Activated B cell treated with CpG ODN at 0.5 μM for 24 hours (primary cell): ENCODE measurements at regions of chr20 and their contacts with region 1.

Region 1: GRCh38 chr20:5448449-5449118 is 131.8 kb upstream of the PROKR2 start:
- DNase-seq: no peak
- ATAC-seq: no peak
- H3K4me3 Mint-ChIP-seq: no peak overlapping the region
- H3K27ac Mint-ChIP-seq: no peak overlapping the region
- H3K4me1 Mint-ChIP-seq: no peaks in the 10 kb centered on the region
- H3K27me3 Mint-ChIP-seq: peaks cover 23% of the 10 kb centered on the region
- CTCF ChIP-seq: peak; percentile 38

Region 2: DNA sequence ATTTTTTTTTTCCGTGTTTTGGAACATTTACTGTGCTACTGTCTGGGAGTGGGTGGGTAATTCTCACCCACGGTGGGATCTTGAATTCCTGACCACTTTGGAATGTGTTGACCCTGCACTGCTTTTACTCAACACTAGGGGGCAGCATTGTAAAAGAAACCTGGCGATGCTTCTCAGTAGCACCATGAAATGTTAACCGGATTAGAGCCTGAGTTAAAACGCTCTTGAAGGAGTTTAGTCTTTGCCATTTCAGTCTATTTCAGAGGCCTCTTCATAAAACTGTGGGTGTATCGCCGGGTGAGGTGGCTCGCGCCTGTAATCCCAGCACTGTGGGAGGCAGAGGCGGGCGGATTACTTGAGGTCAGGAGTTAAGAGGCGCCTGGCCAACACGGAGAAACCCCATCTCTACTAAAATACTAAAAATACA is 841.3 kb before region 1 on chr20:
- CTCF ChIA-PET with region 1: interaction called, 5 read pairs
- POLR2A ChIA-PET with region 1: no interaction called
- intact Hi-C with region 1: loop called (anchors 1 kb)
- DNase-seq: peak; percentile 31
- ATAC-seq: peak; percentile 93
- H3K4me3 Mint-ChIP-seq: no peak overlapping the region
- H3K27ac Mint-ChIP-seq: peak overlapping the region; percentile 13
- H3K4me1 Mint-ChIP-seq: peaks cover 9% of the 10 kb centered on the region
- H3K27me3 Mint-ChIP-seq: peaks cover 3% of the 10 kb centered on the region
- CTCF ChIP-seq: peak; percentile 96

Region 3: GRCh38 chr20:4720041-4720976 is 728.3 kb before region 1 on chr20:
- CTCF ChIA-PET with region 1: no interaction called
- POLR2A ChIA-PET with region 1: no interaction called
- intact Hi-C with region 1: loop called (anchors 10 kb)
- DNase-seq: peak; percentile 64
- ATAC-seq: peak; percentile 97
- H3K4me3 Mint-ChIP-seq: peak overlapping the region; percentile 55
- H3K27ac Mint-ChIP-seq: peak overlapping the region; percentile 85
- H3K4me1 Mint-ChIP-seq: peaks cover 44% of the 10 kb centered on the region
- H3K27me3 Mint-ChIP-seq: no peaks in the 10 kb centered on the region
- CTCF ChIP-seq: peak; percentile 47

Region 4: GRCh38 chr20:4740774-4741431 is 707.7 kb before region 1 on chr20:
- CTCF ChIA-PET with region 1: no interaction called
- POLR2A ChIA-PET with region 1: no interaction called
- intact Hi-C with region 1: loop called (anchors 5 kb)
- DNase-seq: peak; percentile 48
- ATAC-seq: peak; percentile 58
- H3K4me3 Mint-ChIP-seq: no peak overlapping the region
- H3K27ac Mint-ChIP-seq: no peak overlapping the region
- H3K4me1 Mint-ChIP-seq: no peaks in the 10 kb centered on the region
- H3K27me3 Mint-ChIP-seq: peaks cover 3% of the 10 kb centered on the region
- CTCF ChIP-seq: peak; percentile 84

Region 5: GRCh38 chr20:4763723-4764510 is 684.7 kb before region 1 on chr20:
- CTCF ChIA-PET with region 1: no interaction called
- POLR2A ChIA-PET with region 1: interaction called, 5 read pairs
- intact Hi-C with region 1: loop called (anchors 5 kb)
- DNase-seq: no peak
- ATAC-seq: no peak
- H3K4me3 Mint-ChIP-seq: no peak overlapping the region
- H3K27ac Mint-ChIP-seq: no peak overlapping the region
- H3K4me1 Mint-ChIP-seq: peaks cover 31% of the 10 kb centered on the region
- H3K27me3 Mint-ChIP-seq: no peaks in the 10 kb centered on the region
- CTCF ChIP-seq: no peak

Region 6: GRCh38 chr20:5126512-5127203 is 321.9 kb before region 1 on chr20 and contains the start of gene CDS2:
- CTCF ChIA-PET with region 1: interaction called, 11 read pairs
- POLR2A ChIA-PET with region 1: no interaction called
- intact Hi-C with region 1: loop called (anchors 1 kb)
- DNase-seq: peak; percentile 99
- ATAC-seq: peak; percentile 87
- H3K4me3 Mint-ChIP-seq: peak within 1 kb of the TSS; percentile 87
- H3K27ac Mint-ChIP-seq: peak within 1 kb of the TSS; percentile 90
- H3K4me1 Mint-ChIP-seq: peaks cover 33% of the 10 kb centered on the region
- H3K27me3 Mint-ChIP-seq: no peaks in the 10 kb centered on the region
- CTCF ChIP-seq: no peak
- total RNA-seq, gene CDS2: 32.4 and 37.4 TPM in 2 replicates

Region 7: DNA sequence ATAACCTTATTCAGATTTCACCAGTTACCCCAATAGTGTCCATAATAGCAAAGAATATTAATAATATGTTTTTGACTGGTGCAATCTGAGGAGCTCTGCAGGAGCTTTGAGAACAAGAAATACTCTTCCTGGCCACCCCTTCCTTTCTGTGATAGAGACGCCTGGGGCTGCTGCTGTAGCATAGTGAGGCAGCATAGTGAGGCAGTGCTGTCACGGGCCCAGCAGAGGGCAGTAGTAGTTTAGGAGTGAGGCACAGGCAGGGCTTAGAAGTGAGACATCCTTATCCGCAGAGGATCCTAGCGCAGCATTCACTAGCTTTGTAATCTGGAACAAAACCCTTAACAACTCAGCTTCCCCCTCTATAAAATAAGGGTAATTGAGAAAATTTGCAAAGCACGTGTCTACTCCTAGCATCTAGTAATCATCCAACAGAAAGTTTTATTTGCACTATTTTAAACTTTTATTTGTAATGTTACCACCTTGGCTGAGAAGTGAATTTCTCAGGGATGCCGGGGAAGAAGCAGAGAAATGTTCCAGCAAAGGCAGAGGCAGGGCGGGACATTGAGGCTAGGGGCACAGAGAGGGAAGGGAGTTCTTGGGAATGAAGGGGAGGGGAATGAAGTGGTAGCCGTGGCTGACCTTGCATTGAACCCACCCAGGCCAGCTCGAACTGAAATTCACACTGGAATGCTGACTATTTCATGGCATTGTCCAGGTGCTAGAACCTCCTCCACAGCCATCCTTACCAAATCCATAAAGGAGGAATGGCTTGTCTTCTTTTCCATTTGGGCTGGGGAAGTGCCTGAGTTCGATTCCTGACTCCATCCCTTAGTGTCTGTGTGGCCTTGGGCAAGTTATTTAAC is 243.0 kb before region 1 on chr20:
- CTCF ChIA-PET with region 1: interaction called, 14 read pairs
- POLR2A ChIA-PET with region 1: no interaction called
- intact Hi-C with region 1: loop called (anchors 1 kb)
- DNase-seq: no peak
- ATAC-seq: peak; percentile 97
- H3K4me3 Mint-ChIP-seq: no peak overlapping the region
- H3K27ac Mint-ChIP-seq: no peak overlapping the region
- H3K4me1 Mint-ChIP-seq: no peaks in the 10 kb centered on the region
- H3K27me3 Mint-ChIP-seq: no peaks in the 10 kb centered on the region
- CTCF ChIP-seq: peak; percentile 79

Region 8: DNA sequence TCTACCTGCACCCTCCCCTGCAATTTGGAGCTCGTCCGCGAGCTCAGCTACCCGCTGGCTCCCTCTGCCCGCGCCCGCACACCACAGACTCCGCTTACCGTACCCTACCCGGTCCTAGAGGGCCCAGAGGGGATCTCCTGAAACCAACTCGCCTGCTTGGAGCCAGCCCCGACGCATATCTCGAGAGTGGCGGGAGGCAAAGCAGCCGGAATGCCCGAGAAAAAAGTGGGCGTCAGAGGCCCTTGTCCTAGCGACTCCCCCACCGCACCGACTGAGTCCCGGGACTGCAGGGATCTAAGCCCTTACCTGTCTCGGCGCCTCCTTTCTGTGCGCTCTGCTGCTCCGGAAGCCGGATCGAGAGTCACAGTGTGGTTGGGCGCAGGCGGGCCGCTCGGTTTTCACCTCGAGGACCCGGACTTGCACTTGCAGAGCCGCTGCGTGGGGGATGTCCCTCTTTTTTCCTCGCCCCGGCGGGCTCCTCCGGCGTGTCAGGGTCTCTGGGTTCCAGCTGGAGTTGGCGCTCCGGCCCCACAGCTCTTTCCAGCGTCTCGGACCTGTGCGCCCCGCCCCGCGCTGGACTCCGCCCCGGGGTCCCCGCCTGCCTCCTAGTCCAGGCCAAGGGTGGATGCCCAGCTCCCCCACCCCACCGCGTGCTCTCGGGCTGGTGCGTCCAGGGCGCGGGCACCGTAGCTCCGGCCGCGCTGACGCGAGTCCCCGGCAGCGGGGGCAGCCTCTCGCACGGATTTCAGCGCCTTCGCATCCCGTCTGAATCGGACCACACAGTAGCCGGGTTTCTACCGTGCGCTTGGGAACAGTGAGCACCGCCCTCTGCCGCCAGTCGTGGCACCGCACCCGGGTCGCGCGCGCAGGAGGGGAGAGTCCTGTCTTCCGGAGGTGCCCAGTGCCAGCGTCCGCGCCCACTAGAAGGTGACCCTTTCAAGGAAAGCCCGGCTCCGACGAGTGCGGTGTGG is 132.1 kb before region 1 on chr20 and contains the start of gene PROKR2:
- CTCF ChIA-PET with region 1: no interaction called
- POLR2A ChIA-PET with region 1: no interaction called
- intact Hi-C with region 1: no loop called
- DNase-seq: no peak
- ATAC-seq: no peak
- H3K4me3 Mint-ChIP-seq: no peak within 1 kb of the TSS
- H3K27ac Mint-ChIP-seq: no peak within 1 kb of the TSS
- H3K4me1 Mint-ChIP-seq: no peaks in the 10 kb centered on the region
- H3K27me3 Mint-ChIP-seq: peaks cover 37% of the 10 kb centered on the region
- CTCF ChIP-seq: no peak
- total RNA-seq, gene PROKR2: not detected in 2 replicates

Region 9: DNA sequence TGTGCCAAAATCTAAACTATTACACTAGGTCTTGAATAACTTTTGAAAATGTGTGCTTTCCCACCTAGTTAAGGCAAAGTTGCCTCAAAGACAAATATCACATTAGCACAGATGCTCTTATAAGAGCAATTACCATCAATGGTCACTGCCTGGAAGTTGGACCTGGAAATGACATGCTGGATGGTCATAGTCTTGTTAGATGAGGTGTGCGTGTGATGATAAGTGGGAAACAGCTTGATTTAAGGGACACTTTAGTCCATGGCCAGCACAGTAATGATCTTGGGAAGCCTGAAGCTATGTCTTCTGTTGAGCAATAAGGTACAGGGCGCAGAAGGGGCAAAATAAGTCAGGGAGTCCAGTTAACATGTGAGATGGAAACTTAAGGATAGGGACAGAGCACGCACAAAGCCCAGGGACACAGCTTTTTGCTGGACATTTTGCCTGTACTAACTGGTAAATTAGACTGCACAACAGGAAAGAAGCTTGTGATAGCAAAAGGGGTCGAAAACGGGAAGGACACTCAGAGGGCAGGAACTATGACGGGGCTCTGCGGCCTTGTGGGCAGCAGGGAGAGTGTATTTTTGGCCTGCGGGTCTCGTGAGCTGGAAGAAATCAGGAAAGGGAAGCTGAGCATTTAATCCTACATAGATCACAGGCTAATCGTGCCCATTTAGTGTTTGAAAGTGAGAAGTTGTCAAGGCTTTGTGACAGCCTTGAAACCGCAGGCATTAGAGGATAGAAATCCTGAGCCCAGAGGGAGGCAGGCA is 1252.2 kb after region 1 on chr20:
- CTCF ChIA-PET with region 1: no interaction called
- POLR2A ChIA-PET with region 1: no interaction called
- intact Hi-C with region 1: no loop called
- DNase-seq: no peak
- ATAC-seq: no peak
- H3K4me3 Mint-ChIP-seq: no peak overlapping the region
- H3K27ac Mint-ChIP-seq: no peak overlapping the region
- H3K4me1 Mint-ChIP-seq: no peaks in the 10 kb centered on the region
- H3K27me3 Mint-ChIP-seq: no peaks in the 10 kb centered on the region
- CTCF ChIP-seq: no peak